Activated T-helper 1 cell treated with anti-CD3 and anti-CD28 coated beads, Interleukin-12 subunit alpha, Interleukin-12 subunit beta, Interleukin-2, Interleukin-4 antibody, amounts not matched to agents 30 ng/mL and 10 ng/mL and 1 ng/mL, durations not matched to agents 14 hours and 24 hours and 36 hours (primary cell): ENCODE measurements at regions of chr15 and their contacts with region 1.

Region 1: GRCh38 chr15:40807028-40807887 is at the starts of genes DNAJC17 and ZFYVE19:
- DNase-seq: peak; percentile 93
- H3K4me3 Mint-ChIP-seq: peak within 1 kb of the TSS; percentile 93
- H3K27ac Mint-ChIP-seq: peak within 1 kb of the TSS; percentile 100
- H3K4me1 Mint-ChIP-seq: peaks cover 17% of the 10 kb centered on the region
- H3K27me3 Mint-ChIP-seq: no peaks in the 10 kb centered on the region
- total RNA-seq, gene DNAJC17: 52.5 and 54.1 TPM in 2 replicates
- total RNA-seq, gene ZFYVE19: 36.2 and 38.6 TPM in 2 replicates

Region 2: DNA sequence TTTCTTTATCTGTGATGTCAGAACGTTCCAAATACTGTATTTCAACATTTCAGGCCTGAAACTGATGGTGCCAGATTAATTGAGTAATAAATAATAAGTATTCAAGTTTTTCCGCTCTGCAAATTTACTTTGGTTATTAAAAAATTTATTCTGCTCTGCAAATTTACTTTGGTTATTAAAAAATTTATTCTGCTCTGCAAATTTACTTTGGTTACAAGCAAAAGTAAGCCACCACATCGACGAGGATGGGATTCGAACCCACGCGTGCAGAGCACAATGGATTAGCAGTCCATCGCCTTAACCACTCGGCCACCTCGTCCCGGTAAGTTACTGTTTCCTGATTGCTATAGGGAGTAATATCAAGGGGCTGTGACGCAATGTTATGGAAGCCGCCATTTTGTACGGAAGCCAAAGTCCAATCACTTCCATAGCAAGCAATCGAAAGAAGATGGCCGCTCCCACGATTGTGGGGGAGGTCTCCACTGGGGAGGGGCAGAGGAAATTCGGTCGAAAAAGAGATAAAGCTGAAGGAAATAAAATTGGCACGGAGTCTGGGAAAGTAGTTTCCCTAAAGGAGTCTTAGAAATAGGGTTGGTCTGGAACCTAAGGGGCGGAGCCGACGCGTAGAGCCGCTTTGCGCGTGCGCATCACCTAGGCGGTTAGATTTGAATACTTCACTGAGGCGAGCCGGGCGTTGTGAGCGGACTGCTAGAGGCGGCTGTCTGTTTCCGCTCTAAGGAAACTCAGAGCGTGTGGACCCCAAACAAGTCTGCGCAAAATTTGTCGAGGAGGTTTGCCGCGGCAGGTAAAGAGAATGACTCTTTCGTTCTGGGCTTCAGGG is 213.4 kb before region 1 on chr15 and contains the start of gene KNL1:
- intact Hi-C with region 1: loop called (anchors 1 kb)
- DNase-seq: peak; percentile 88
- H3K4me3 Mint-ChIP-seq: peak within 1 kb of the TSS; percentile 93
- H3K27ac Mint-ChIP-seq: peak within 1 kb of the TSS; percentile 98
- H3K4me1 Mint-ChIP-seq: peaks cover 45% of the 10 kb centered on the region
- H3K27me3 Mint-ChIP-seq: peaks cover 2% of the 10 kb centered on the region
- total RNA-seq, gene KNL1: 21.6 and 22.4 TPM in 2 replicates

Region 3: GRCh38 chr15:40743921-40744814 is 63.1 kb before region 1 on chr15:
- intact Hi-C with region 1: loop called (anchors 1 kb)
- DNase-seq: peak; percentile 70
- H3K4me3 Mint-ChIP-seq: peak overlapping the region; percentile 60
- H3K27ac Mint-ChIP-seq: peak overlapping the region; percentile 95
- H3K4me1 Mint-ChIP-seq: peaks cover 43% of the 10 kb centered on the region
- H3K27me3 Mint-ChIP-seq: no peaks in the 10 kb centered on the region

Region 4: DNA sequence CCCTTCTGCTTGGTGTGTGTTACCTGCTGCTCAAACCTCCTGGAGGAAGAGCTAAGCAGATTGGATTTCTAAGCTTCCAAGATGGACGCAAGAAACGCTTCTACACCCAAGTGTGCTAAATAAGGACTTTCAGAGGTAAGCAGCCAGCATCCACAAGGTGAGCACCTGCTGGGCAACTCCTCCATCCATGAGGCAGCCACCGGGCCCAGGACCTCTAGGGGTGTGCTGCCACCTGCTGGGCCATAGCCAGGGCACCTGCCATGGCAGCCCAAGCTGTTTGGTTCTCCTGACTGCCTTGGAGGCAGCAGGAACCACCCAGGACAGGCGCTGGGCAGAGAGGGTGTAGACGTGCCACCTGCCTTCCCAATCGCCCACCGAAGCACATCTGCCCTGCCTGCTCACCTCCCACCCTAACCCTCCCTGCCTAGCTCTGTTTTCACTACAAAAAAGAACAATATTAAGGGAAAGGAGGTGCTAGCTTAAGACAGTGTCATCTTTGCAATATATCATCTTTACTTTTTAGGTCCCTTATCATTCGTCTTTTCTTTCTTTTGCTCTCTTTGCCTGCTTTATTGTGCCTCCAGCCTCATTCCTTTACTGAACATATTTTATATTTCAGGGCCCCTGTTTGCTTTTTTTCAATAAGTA is 24.6 kb before region 1 on chr15:
- intact Hi-C with region 1: no loop called
- DNase-seq: peak; percentile 74
- H3K4me3 Mint-ChIP-seq: no peak overlapping the region
- H3K27ac Mint-ChIP-seq: no peak overlapping the region
- H3K4me1 Mint-ChIP-seq: peaks cover 21% of the 10 kb centered on the region
- H3K27me3 Mint-ChIP-seq: no peaks in the 10 kb centered on the region

Region 5: DNA sequence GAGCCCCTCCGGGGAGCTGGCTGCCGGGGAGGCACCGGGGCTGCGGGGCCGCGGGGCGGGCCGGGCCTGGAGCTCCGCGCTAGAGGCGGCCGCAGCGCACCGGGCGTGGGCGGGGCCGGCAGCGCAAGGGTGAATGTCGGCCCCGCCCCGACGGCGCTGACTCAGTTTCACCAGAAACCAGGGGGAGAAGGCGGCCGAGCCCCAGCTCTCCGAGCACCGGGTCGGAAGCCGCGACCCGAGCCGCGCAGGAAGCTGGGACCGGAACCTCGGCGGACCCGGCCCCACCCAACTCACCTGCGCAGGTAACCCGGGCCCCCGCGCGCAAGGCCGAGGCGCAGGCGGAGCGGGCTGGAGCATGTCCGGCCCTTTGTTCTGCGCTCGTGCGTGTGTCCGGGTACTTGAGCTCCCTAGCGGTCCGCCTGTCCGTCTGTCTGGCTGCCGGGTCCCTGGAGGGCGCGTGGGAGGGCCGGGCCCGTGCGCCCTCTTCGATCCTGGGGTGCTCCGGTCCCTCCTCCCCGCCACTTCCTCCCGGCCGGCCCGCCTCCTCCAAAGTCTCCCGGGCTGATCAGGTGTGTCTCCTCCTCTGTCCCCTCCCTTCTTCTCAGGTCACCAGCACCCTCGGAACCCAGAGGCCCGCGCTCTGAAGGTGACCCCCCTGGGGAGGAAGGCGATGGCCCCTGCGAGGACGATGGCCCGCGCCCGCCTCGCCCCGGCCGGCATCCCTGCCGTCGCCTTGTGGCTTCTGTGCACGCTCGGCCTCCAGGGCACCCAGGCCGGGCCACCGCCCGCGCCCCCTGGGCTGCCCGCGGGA is 36.8 kb after region 1 on chr15 and contains the start of gene SPINT1:
- intact Hi-C with region 1: loop called (anchors 1 kb)
- DNase-seq: peak; percentile 27
- H3K4me3 Mint-ChIP-seq: peak within 1 kb of the TSS; percentile 87
- H3K27ac Mint-ChIP-seq: peak within 1 kb of the TSS; percentile 75
- H3K4me1 Mint-ChIP-seq: peaks cover 33% of the 10 kb centered on the region
- H3K27me3 Mint-ChIP-seq: peaks cover 15% of the 10 kb centered on the region
- total RNA-seq, gene SPINT1: 11.0 and 12.4 TPM in 2 replicates

Region 6: DNA sequence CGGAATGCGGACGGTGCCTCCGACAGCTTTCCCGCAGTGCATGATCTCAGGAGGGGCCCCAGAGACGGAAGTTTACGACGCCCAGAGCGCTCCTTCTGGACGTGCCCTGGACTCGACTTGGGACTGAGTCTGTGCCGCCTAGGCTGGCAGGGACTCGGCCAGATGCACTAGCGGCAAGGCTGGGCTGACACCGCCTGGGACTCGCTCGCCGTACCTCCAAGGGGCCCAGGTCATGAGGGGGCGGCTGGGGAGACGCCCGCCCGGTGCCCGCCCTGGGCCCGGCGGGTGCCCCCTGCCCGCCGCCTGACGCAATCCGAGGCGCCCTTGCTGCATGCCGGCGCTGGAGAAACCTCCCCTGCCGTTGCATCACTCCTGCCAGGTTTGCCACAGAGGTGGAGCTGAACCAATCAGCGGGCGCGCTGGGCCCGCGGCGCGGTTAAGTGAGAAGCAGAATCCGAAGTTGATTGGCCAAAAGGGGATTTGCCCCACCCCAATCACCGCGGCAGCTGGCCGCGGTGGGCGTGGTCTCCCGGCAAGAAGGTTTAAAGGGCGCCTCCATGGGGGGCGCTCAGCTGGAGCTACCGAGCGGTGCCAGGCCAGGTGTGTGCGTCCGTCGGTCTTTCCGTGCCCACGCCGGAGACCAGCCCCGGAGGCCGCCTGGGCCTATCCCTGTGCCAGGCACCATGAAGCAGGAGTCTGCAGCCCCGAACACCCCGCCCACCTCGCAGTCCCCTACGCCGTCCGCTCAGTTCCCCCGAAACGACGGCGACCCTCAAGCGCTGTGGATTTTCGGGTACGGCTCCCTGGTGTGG is 145.8 kb after region 1 on chr15 and contains the start of gene CHAC1:
- intact Hi-C with region 1: loop called (anchors 5 kb)
- DNase-seq: peak; percentile 96
- H3K4me3 Mint-ChIP-seq: peak within 1 kb of the TSS; percentile 92
- H3K27ac Mint-ChIP-seq: peak within 1 kb of the TSS; percentile 89
- H3K4me1 Mint-ChIP-seq: peaks cover 48% of the 10 kb centered on the region
- H3K27me3 Mint-ChIP-seq: no peaks in the 10 kb centered on the region
- total RNA-seq, gene CHAC1: 11.7 and 12.4 TPM in 2 replicates

Region 7: GRCh38 chr15:41331833-41332787 is 524.9 kb after region 1 on chr15 and contains the start of gene OIP5:
- intact Hi-C with region 1: loop called (anchors 2 kb)
- DNase-seq: peak; percentile 98
- H3K4me3 Mint-ChIP-seq: peak within 1 kb of the TSS; percentile 94
- H3K27ac Mint-ChIP-seq: peak within 1 kb of the TSS; percentile 95
- H3K4me1 Mint-ChIP-seq: peaks cover 33% of the 10 kb centered on the region
- H3K27me3 Mint-ChIP-seq: no peaks in the 10 kb centered on the region
- total RNA-seq, gene OIP5: 15.6 and 17.6 TPM in 2 replicates